ENCODE measurements at regions of chr9 and their contacts with region 1.

Region 1: DNA sequence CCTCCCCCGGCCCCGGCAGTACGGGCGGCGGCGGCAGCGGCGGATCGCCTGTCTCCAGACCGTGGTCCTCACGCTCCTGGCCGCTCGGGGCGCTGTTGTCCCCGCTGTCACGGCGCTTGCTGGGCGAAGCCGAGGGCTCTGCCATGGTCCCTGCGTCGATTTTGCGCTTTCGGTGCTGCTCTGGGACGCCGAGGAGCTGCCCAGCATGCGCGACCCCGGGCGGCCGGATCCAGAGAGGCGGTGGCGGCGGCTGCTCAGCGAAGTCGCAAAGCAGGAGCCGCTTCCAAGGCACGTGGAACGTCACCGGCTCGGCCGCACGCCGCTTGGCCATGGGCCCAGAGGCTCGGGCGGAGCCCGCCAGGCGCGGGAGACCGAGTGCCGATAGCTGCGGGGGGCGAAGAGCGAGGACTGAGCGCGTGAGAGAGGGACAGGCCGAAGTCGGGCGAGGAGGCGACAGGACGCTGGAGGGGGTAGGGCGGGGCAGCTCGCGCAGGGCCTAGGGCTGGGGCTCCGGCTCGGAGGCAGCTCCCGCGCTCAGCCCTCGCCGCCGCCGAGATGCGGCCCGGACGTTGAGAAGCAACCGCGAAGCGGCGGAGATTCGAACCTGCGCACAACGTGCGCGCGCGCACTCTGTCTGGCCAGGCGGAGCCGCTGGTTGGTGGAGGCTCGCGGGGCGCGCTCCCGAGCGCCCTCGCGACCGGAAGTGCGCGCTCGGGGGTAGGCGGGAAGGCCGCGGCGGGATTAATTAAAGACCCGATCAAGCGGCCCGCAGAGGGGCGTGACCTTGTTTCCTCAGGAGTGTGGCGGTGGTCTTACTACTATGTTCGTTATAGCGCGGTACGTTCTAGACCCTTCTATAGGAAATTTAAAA is at the start of gene C9orf40:
- DNase-seq: peak; percentile 81
- ATAC-seq: peak; percentile 88
- H3K4me3 ChIP-seq: peak within 1 kb of the TSS; percentile 86 to 89
- H3K27ac ChIP-seq: peak within 1 kb of the TSS; percentile 99
- H3K4me1 ChIP-seq: peaks cover 3 to 15% of the 10 kb centered on the region in 2 experiments; a peak in 2 of 4 replicates
- H3K27me3 ChIP-seq: no peaks in the 10 kb centered on the region
- CTCF ChIP-seq: peak in 2 of 3 experiments; percentile 66 to 82; a peak in 4 of 6 replicates
- POLR2A ChIP-seq: no peak
- RAD21 ChIP-seq: 0 out of 2 replicates have a peak, but pooled peaks have one; percentile 12
- total RNA-seq, gene C9orf40: 12.8 TPM

Region 2: GRCh38 chr9:74940600-74940999 is 11.9 kb before region 1 on chr9:
- CTCF ChIA-PET with region 1: interaction called, 12 read pairs
- POLR2A ChIA-PET with region 1: interaction called, 3 read pairs
- RAD21 ChIA-PET with region 1: no interaction called
- intact Hi-C with region 1: no loop called
- DNase-seq: no peak
- ATAC-seq: no peak
- H3K4me3 ChIP-seq: no peak overlapping the region
- H3K27ac ChIP-seq: no peak overlapping the region
- H3K4me1 ChIP-seq: peaks cover 0 to 7% of the 10 kb centered on the region in 2 experiments; a peak in 1 of 4 replicates
- H3K27me3 ChIP-seq: no peaks in the 10 kb centered on the region
- CTCF ChIP-seq: no peak
- POLR2A ChIP-seq: no peak
- RAD21 ChIP-seq: no peak

Region 3: GRCh38 chr9:75027187-75028107 is 74.9 kb after region 1 on chr9:
- CTCF ChIA-PET with region 1: interaction called, 5 read pairs
- POLR2A ChIA-PET with region 1: interaction called, 4 read pairs
- RAD21 ChIA-PET with region 1: no interaction called
- intact Hi-C with region 1: loop called (anchors 5 kb)
- DNase-seq: peak; percentile 2
- ATAC-seq: peak; percentile 60
- H3K4me3 ChIP-seq: peak overlapping the region; percentile 82 to 89
- H3K27ac ChIP-seq: peak overlapping the region; percentile 96
- H3K4me1 ChIP-seq: peaks cover 3 to 19% of the 10 kb centered on the region in 2 experiments; a peak in 3 of 4 replicates
- H3K27me3 ChIP-seq: no peaks in the 10 kb centered on the region
- CTCF ChIP-seq: 0 out of 6 replicates have a peak, but pooled peaks of 1 of the 3 experiments have one; percentile 9
- POLR2A ChIP-seq: no peak
- RAD21 ChIP-seq: no peak

Region 4: DNA sequence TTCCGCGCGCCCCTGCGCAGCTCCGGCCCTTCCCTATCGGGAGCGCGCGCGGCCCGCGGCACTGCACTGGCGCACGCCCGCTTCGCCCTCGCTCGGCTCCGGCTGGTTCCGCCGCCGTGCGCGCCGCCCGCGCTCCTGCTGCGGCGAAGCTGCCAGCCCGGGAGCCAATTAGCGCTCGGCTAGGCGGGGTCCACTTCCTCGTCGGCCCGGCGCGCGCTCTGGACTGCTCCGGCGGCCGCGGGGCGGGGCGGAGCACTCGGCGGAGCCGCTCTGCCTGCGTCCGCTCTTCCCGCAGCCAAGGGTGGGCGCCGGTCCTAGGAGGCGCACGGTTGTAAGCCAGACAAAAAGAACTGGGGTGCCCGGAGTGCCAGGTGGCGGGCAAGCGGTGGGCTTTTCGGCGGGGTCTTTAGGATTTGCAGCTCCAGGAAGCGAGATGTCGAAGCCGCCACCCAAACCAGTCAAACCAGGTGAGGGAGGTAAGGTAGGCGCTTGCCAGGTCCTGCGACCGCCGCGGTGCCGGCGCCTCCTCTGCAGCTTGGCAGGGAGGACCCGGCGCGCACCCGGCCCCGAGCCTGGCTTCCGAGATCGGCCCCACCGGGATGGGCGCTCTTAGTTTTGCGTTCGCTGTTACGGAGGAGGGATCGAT is 135.9 kb after region 1 on chr9 and contains the start of gene OSTF1:
- CTCF ChIA-PET with region 1: interaction called, 3 read pairs
- POLR2A ChIA-PET with region 1: interaction called, 3 read pairs
- RAD21 ChIA-PET with region 1: no interaction called
- intact Hi-C with region 1: loop called (anchors 5 kb)
- DNase-seq: peak; percentile 90
- ATAC-seq: peak; percentile 90
- H3K4me3 ChIP-seq: peak within 1 kb of the TSS; percentile 78 to 86
- H3K27ac ChIP-seq: peak within 1 kb of the TSS; percentile 91
- H3K4me1 ChIP-seq: peaks cover 14 to 23% of the 10 kb centered on the region in 2 experiments; a peak in 3 of 4 replicates
- H3K27me3 ChIP-seq: no peaks in the 10 kb centered on the region
- CTCF ChIP-seq: no peak
- POLR2A ChIP-seq: peak; percentile 70
- RAD21 ChIP-seq: no peak
- total RNA-seq, gene OSTF1: 20.7 TPM

Region 5: DNA sequence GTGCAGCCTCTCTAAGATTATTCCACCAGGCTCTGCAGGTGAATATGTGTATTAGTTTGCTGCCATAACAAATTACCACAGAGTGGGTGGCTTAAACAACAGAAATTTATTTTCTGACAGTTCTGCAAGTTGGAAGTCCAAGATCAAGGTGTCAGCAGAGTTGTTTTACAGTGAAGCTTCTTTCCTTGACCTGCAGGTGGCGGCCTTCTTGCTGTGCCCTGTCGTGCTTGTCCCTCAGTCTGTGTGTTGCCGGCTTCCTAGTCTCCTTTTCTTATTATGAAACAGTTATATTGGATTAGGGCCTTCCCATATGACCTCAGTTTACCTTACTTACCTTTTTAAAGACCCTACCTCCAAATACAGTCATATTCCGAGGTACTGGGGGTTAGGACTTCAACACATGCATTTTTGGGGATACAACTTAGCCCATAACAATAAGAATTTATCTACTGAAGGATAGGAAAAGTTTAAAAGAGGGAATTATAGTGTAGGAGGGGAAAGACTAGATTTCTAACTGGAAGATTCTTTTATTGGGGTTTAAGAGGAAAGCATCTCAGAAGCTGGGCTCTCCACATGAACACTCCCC is 233.2 kb after region 1 on chr9:
- CTCF ChIA-PET with region 1: no interaction called
- POLR2A ChIA-PET with region 1: no interaction called
- RAD21 ChIA-PET with region 1: no interaction called
- intact Hi-C with region 1: loop called (anchors 10 kb)
- DNase-seq: peak; percentile 38
- ATAC-seq: peak; percentile 85
- H3K4me3 ChIP-seq: no peak overlapping the region
- H3K27ac ChIP-seq: no peak overlapping the region
- H3K4me1 ChIP-seq: peaks cover 6 to 14% of the 10 kb centered on the region in 2 experiments; a peak in 2 of 4 replicates
- H3K27me3 ChIP-seq: no peaks in the 10 kb centered on the region
- CTCF ChIP-seq: peak; percentile 36 to 85 (median 78); a peak in 5 of 6 replicates
- POLR2A ChIP-seq: no peak
- RAD21 ChIP-seq: no peak; the same call in 1 of the 2 replicates

Measured in HCT116 (cell line).